Activated CD8-positive, alpha-beta T cell treated with anti-CD3 and anti-CD28 coated beads, Interleukin-2, amount 10 ng/mL, durations not matched to agents 7 days and 5 days (primary cell): ENCODE measurements at regions of chr16 and their contacts with region 1.

Region 1: DNA sequence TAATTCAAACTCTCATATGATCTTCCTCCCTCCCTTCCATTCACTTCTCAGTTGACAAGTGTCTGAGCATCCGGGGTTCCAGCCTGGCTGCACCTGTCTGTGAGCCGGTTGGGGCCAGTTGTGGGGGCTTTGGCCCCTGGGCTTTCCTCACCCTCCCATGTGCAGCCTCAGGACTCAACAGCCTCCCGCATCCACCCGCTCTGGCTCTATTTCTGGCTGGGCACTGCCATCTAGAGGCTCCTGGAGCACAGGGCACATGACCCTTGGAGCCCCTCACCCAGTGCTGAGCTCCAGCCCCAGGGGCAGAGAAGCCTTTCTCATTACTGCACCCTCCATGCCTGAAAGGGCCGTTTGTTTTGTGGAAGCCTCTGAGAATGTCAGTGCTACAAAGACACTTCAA is 43.3 kb downstream of the HAPSTR1 start:
- DNase-seq: peak; percentile 69
- ATAC-seq: peak; percentile 64
- H3K4me3 Mint-ChIP-seq: no peak overlapping the region
- H3K27ac Mint-ChIP-seq: no peak overlapping the region
- H3K4me1 Mint-ChIP-seq: peaks cover 40% of the 10 kb centered on the region
- H3K27me3 Mint-ChIP-seq: peaks cover 2% of the 10 kb centered on the region

Region 2: DNA sequence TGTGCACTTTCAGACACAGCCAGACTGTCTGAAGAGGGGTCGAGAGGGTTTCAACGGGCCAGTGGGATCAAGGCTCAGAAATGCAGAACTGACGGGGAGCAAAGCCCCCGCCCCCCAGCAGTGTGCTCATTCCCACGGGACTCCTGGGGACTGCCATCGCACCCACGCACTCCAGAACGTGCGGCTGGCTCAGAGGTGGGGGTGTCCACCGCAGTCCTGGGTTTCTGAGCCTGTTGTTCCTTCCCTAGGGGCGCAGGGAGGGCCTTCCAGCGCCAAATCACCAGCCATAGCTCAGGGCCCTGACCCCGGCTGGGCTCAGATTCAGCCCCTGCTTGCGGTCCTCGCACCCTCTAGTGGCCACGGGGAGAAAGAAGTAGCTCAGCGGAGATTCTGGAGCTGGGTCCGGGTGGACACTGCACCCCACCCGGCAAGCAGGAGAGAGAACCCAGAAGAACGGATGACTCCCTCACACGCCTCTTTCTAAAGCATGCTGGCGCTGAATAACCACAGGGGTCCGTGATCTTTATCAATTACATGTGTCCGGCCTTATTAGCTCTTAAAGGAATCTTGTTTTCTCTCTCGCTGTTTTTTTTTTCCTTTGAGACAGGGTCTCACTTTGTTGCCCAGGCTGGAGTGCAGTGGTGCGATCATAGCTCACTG is 126.0 kb before region 1 on chr16:
- CTCF ChIA-PET with region 1: interaction called, 20 read pairs
- POLR2A ChIA-PET with region 1: no interaction called
- DNase-seq: peak; percentile 77
- ATAC-seq: peak; percentile 99
- H3K4me3 Mint-ChIP-seq: no peak overlapping the region
- H3K27ac Mint-ChIP-seq: no peak overlapping the region
- H3K4me1 Mint-ChIP-seq: peaks cover 4% of the 10 kb centered on the region
- H3K27me3 Mint-ChIP-seq: peaks cover 16% of the 10 kb centered on the region

Region 3: GRCh38 chr16:9099131-9099625 is 35.6 kb before region 1 on chr16:
- CTCF ChIA-PET with region 1: interaction called, 18 read pairs
- POLR2A ChIA-PET with region 1: no interaction called
- DNase-seq: no peak
- ATAC-seq: peak; percentile 11
- H3K4me3 Mint-ChIP-seq: peak overlapping the region; percentile 57
- H3K27ac Mint-ChIP-seq: peak overlapping the region; percentile 69
- H3K4me1 Mint-ChIP-seq: peaks cover 88% of the 10 kb centered on the region
- H3K27me3 Mint-ChIP-seq: no peaks in the 10 kb centered on the region

Region 4: GRCh38 chr16:9123871-9124270 is 10.9 kb before region 1 on chr16:
- CTCF ChIA-PET with region 1: interaction called, 14 read pairs
- POLR2A ChIA-PET with region 1: interaction called, 3 read pairs
- DNase-seq: no peak
- ATAC-seq: no peak
- H3K4me3 Mint-ChIP-seq: no peak overlapping the region
- H3K27ac Mint-ChIP-seq: peak overlapping the region; percentile 15
- H3K4me1 Mint-ChIP-seq: peaks cover 64% of the 10 kb centered on the region
- H3K27me3 Mint-ChIP-seq: no peaks in the 10 kb centered on the region

Region 5: GRCh38 chr16:9148374-9149015 is 13.8 kb after region 1 on chr16:
- CTCF ChIA-PET with region 1: interaction called, 17 read pairs
- POLR2A ChIA-PET with region 1: no interaction called
- DNase-seq: no peak
- ATAC-seq: no peak
- H3K4me3 Mint-ChIP-seq: no peak overlapping the region
- H3K27ac Mint-ChIP-seq: no peak overlapping the region
- H3K4me1 Mint-ChIP-seq: no peaks in the 10 kb centered on the region
- H3K27me3 Mint-ChIP-seq: peaks cover 4% of the 10 kb centered on the region

Region 6: GRCh38 chr16:9270424-9270823 is 135.7 kb after region 1 on chr16:
- CTCF ChIA-PET with region 1: no interaction called
- POLR2A ChIA-PET with region 1: no interaction called
- DNase-seq: no peak
- ATAC-seq: no peak
- H3K4me3 Mint-ChIP-seq: no peak overlapping the region
- H3K27ac Mint-ChIP-seq: no peak overlapping the region
- H3K4me1 Mint-ChIP-seq: no peaks in the 10 kb centered on the region
- H3K27me3 Mint-ChIP-seq: no peaks in the 10 kb centered on the region

Region 7: GRCh38 chr16:10181196-10182162 is 1046.7 kb after region 1 on chr16:
- CTCF ChIA-PET with region 1: interaction called, 10 read pairs
- POLR2A ChIA-PET with region 1: no interaction called
- DNase-seq: peak; percentile 40
- ATAC-seq: peak; percentile 61
- H3K4me3 Mint-ChIP-seq: no peak overlapping the region
- H3K27ac Mint-ChIP-seq: no peak overlapping the region
- H3K4me1 Mint-ChIP-seq: peaks cover 10% of the 10 kb centered on the region
- H3K27me3 Mint-ChIP-seq: peaks cover 37% of the 10 kb centered on the region